Activated CD4-positive, alpha-beta T cell treated with anti-CD3 and anti-CD28 coated beads, Interleukin-2, amount 10 ng/mL, durations not matched to agents 24 days and 14 days (primary cell): ENCODE measurements at regions of chr6 and their contacts with region 1.

Region 1: GRCh38 chr6:32868257-32868788 is 14.3 kb downstream of the PSMB9 start:
- DNase-seq: peak; percentile 95
- H3K4me3 Mint-ChIP-seq: no peak overlapping the region
- H3K27ac Mint-ChIP-seq: no peak overlapping the region
- H3K4me1 Mint-ChIP-seq: peaks cover 31% of the 10 kb centered on the region
- H3K27me3 Mint-ChIP-seq: peaks cover 2% of the 10 kb centered on the region

Region 2: GRCh38 chr6:32413427-32414047 is 454.8 kb before region 1 on chr6:
- intact Hi-C with region 1: loop called (anchors 2 kb)
- DNase-seq: peak; percentile 94
- H3K4me3 Mint-ChIP-seq: no peak overlapping the region
- H3K27ac Mint-ChIP-seq: no peak overlapping the region
- H3K4me1 Mint-ChIP-seq: peaks cover 8% of the 10 kb centered on the region
- H3K27me3 Mint-ChIP-seq: peaks cover 52% of the 10 kb centered on the region

Region 3: GRCh38 chr6:32700391-32701040 is 167.8 kb before region 1 on chr6:
- intact Hi-C with region 1: loop called (anchors 2 kb)
- DNase-seq: peak; percentile 75
- H3K4me3 Mint-ChIP-seq: no peak overlapping the region
- H3K27ac Mint-ChIP-seq: no peak overlapping the region
- H3K4me1 Mint-ChIP-seq: peaks cover 2% of the 10 kb centered on the region
- H3K27me3 Mint-ChIP-seq: peaks cover 66% of the 10 kb centered on the region

Region 4: GRCh38 chr6:32825966-32826365 is 42.4 kb before region 1 on chr6:
- intact Hi-C with region 1: loop called (anchors 5 kb)
- DNase-seq: peak; percentile 53
- H3K4me3 Mint-ChIP-seq: no peak overlapping the region
- H3K27ac Mint-ChIP-seq: no peak overlapping the region
- H3K4me1 Mint-ChIP-seq: peaks cover 26% of the 10 kb centered on the region
- H3K27me3 Mint-ChIP-seq: no peaks in the 10 kb centered on the region

Region 5: DNA sequence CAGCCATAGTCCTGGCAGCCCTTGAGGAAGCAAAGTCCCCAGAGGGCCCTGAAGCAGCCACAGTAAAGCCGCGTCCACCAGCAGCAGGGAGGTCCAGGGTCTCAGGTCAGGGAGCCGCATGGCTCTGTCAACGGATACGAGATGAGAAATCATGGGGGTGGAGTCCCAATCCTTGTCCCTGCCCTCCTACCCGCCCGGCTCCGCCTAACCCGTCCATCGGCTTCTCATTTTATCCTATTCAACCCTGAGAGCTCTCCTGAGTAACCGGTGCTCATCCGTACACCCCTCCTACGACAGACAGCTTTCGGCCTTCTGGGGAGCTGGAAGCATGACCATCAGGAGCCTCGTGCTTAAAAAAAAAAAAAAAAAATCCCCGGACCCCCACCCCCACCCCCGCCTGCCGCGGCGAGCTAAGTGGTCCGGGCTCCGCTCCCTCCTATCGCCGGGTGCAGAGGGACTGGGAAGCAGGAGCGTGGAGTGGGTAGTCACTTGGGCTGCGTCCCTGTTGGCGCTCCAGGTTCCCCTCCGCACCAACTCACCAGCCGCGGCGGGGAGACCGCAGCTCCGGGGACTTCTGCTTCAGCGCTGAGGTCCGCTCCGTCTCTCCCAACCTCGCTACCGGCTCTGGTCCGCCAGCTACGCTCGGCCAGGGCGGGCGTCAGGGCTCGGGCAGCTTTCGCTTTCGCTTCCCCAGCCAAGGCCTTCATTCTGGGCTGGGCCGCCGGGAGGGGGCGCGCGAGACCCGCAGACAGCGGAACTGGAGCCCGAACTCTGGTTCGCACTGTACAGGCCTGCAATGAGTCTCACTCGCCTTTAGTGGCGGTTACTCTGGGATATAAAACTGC is 30.0 kb before region 1 on chr6 and contains the start of gene TAP2:
- intact Hi-C with region 1: loop called (anchors 1 kb)
- DNase-seq: peak; percentile 93
- H3K4me3 Mint-ChIP-seq: peak within 1 kb of the TSS; percentile 83
- H3K27ac Mint-ChIP-seq: peak within 1 kb of the TSS; percentile 99
- H3K4me1 Mint-ChIP-seq: peaks cover 75% of the 10 kb centered on the region
- H3K27me3 Mint-ChIP-seq: no peaks in the 10 kb centered on the region
- total RNA-seq, gene TAP2: 152 and 163 TPM in 2 replicates

Region 6: DNA sequence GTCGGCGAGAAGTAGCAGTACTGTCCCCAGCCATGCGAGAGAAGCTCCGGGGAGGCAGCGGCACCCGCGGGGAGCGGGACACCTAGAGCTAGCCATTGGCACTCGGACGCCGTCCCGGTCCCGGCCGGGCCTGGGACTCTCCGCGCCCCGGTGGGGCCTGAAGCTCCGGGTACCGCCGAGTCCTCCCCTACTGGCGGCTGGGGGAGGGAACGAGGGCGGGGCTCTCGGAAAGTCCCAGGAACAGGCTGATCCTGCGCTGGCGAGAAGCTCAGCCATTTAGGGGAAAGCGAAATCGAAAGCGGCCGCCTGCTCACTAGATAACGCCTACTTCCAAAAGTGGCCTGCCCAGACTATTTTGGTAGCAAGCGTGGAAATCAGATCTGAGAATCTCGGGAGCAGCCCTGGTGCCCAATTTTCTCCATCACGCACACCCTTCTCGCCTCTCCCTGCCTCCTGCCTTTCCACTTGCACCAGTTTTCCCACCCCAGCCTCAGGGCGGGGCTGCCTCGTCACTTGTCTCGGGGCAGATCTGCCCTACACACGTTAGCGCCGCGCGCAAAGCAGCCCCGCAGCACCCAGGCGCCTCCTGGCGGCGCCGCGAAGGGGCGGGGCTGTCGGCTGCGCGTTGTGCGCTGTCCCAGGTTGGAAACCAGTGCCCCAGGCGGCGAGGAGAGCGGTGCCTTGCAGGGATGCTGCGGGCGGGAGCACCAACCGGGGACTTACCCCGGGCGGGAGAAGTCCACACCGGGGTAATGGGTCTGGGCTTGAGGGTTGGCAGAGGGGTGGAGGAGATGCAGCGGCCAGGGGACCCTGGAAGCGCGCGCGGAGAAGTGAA is 14.6 kb before region 1 on chr6 and contains the starts of genes PSMB9 and TAP1:
- intact Hi-C with region 1: loop called (anchors 1 kb)
- DNase-seq: peak; percentile 98
- H3K4me3 Mint-ChIP-seq: peak within 1 kb of the TSS; percentile 97
- H3K27ac Mint-ChIP-seq: peak within 1 kb of the TSS; percentile 96
- H3K4me1 Mint-ChIP-seq: peaks cover 59% of the 10 kb centered on the region
- H3K27me3 Mint-ChIP-seq: no peaks in the 10 kb centered on the region
- total RNA-seq, gene PSMB9: 249 and 257 TPM in 2 replicates
- total RNA-seq, gene TAP1: 275 and 283 TPM in 2 replicates